Caco-2 (cell line): ENCODE measurements at regions of chr2 and their contacts with region 1.

Region 1: DNA sequence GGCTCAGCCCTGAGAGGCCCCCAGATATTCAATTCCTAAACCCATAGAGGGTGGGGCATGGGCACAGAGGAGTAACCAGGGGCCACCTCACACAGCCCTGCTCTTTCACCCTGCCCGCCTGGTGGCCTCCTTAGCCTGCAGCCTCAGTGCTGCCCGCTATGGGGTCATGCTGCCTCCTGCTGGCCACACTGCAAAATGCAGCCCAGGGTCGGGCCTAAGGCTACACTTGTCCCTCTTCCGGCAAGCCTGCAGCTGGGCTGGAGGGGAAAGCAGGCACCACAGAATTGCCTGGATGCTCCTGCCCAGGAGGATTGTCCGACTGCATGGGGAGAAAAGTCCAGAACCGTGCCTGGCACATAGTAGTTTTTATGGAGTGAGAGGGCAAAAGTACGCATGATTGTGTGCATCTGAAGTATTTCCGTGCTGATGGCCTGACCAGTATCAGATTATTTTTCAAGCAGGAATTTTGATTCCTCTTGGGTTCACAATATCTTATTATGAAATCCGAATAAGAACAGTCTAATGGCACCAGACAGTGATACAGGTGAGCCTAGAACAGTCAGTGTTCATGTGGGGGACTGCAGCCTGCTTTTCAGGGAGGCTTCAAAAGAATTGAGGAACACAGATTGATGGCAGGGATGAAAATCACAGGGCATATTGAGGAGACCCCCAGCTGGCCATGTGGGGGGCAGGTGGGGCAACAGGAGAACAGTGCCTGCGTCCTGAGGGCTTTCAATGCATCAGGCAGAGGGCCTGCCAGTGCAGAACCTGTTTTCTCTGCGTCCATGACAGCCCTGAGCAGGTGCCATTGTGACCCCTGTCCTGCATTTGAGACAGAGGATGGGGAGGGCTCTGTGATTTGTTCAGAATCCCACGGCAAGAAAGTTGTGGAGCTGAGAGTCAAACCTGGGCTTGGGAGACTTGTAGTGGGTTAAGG is 51.2 kb upstream of the ALPP start:
- DNase-seq: peak; percentile 56 to 79
- H3K4me3 ChIP-seq: no peak overlapping the region
- H3K4me3 Mint-ChIP-seq: no peak overlapping the region
- H3K27ac Mint-ChIP-seq: no peak overlapping the region
- H3K4me1 ChIP-seq: peaks cover 7% of the 10 kb centered on the region
- H3K4me1 Mint-ChIP-seq: no peaks in the 10 kb centered on the region
- H3K27me3 ChIP-seq: no peaks in the 10 kb centered on the region
- H3K27me3 Mint-ChIP-seq: no peaks in the 10 kb centered on the region
- CTCF ChIP-seq: peak; percentile 59 to 68

Region 2: DNA sequence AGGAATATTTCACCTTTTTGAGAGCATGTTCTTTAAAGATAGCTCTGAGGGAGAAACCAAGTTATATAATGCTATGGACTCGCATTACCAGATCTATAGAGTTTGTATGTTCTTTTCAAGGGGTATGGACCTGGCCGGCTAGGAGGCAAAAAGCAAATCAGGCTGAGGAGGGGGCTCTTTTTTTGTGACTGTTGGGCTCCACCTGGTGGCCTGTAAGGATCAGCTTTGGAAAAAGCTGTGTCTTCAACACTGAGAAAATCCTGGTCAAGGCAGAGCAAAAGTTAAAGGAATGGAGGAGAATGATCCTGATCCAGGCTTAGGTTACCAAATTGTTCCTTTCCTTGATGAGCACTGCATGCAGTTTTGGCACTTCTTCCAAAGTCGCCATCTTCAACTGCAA is 185.3 kb before region 1 on chr2:
- CTCF ChIA-PET with region 1: no interaction called
- POLR2A ChIA-PET with region 1: no interaction called
- intact Hi-C with region 1: loop called (anchors 5 kb)
- DNase-seq: peak; percentile 27 to 36
- H3K4me3 ChIP-seq: no peak overlapping the region
- H3K4me3 Mint-ChIP-seq: no peak overlapping the region
- H3K27ac Mint-ChIP-seq: no peak overlapping the region
- H3K4me1 ChIP-seq: no peaks in the 10 kb centered on the region
- H3K4me1 Mint-ChIP-seq: no peaks in the 10 kb centered on the region
- H3K27me3 ChIP-seq: no peaks in the 10 kb centered on the region
- H3K27me3 Mint-ChIP-seq: no peaks in the 10 kb centered on the region
- CTCF ChIP-seq: peak in 1 of 2 experiments; percentile 65

Region 3: GRCh38 chr2:232250246-232251175 is 76.9 kb before region 1 on chr2:
- CTCF ChIA-PET with region 1: no interaction called
- POLR2A ChIA-PET with region 1: no interaction called
- intact Hi-C with region 1: no loop called
- DNase-seq: no peak
- H3K4me3 ChIP-seq: no peak overlapping the region
- H3K4me3 Mint-ChIP-seq: no peak overlapping the region
- H3K27ac Mint-ChIP-seq: no peak overlapping the region
- H3K4me1 ChIP-seq: no peaks in the 10 kb centered on the region
- H3K4me1 Mint-ChIP-seq: no peaks in the 10 kb centered on the region
- H3K27me3 ChIP-seq: no peaks in the 10 kb centered on the region
- H3K27me3 Mint-ChIP-seq: no peaks in the 10 kb centered on the region
- CTCF ChIP-seq: no peak